Activated CD4-positive, alpha-beta T cell treated with anti-CD3 and anti-CD28 coated beads for 36 hours (primary cell): ENCODE measurements at regions of chr9 and their contacts with region 1.

Region 1: GRCh38 chr9:87678650-87679515 is 47.0 kb upstream of the CTSL start:
- DNase-seq: peak; percentile 55
- ATAC-seq: peak; percentile 36
- H3K4me3 Mint-ChIP-seq: no peak overlapping the region
- H3K27ac Mint-ChIP-seq: no peak overlapping the region
- H3K4me1 Mint-ChIP-seq: peaks cover 11% of the 10 kb centered on the region
- H3K27me3 Mint-ChIP-seq: no peaks in the 10 kb centered on the region

Region 2: GRCh38 chr9:86749894-86750255 is 929.0 kb before region 1 on chr9:
- CTCF ChIA-PET with region 1: no interaction called
- POLR2A ChIA-PET with region 1: no interaction called
- intact Hi-C with region 1: no loop called
- DNase-seq: no peak
- ATAC-seq: no peak
- H3K4me3 Mint-ChIP-seq: no peak overlapping the region
- H3K27ac Mint-ChIP-seq: no peak overlapping the region
- H3K4me1 Mint-ChIP-seq: no peaks in the 10 kb centered on the region
- H3K27me3 Mint-ChIP-seq: no peaks in the 10 kb centered on the region

Region 3: GRCh38 chr9:87359264-87359663 is 319.6 kb before region 1 on chr9:
- CTCF ChIA-PET with region 1: no interaction called
- POLR2A ChIA-PET with region 1: no interaction called
- intact Hi-C with region 1: no loop called
- DNase-seq: no peak
- ATAC-seq: no peak
- H3K4me3 Mint-ChIP-seq: no peak overlapping the region
- H3K27ac Mint-ChIP-seq: no peak overlapping the region
- H3K4me1 Mint-ChIP-seq: no peaks in the 10 kb centered on the region
- H3K27me3 Mint-ChIP-seq: peaks cover 31% of the 10 kb centered on the region

Region 4: DNA sequence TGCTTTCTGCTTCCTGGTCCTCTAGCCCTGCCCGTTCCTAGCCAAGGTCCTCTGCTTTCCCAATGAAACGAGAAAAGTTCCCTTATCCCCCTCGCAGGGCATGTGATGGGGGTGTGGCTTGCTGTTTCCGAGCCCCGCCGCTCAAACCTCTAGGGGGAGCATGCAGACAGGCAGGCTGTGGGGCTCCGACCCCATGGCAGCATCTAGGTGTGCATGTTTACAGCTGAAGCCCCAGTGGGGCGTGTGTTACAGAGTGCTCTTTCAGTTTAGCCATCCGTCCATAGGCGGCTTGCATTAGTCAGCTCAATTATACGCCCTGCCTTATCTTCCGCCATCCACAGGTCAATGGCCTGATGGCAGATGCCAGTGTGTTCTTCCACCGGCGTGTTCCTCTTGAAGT is 155.5 kb after region 1 on chr9:
- CTCF ChIA-PET with region 1: no interaction called
- POLR2A ChIA-PET with region 1: no interaction called
- intact Hi-C with region 1: loop called in 1 of 2 experiments (anchors 5 kb)
- DNase-seq: peak; percentile 27
- ATAC-seq: no peak
- H3K4me3 Mint-ChIP-seq: no peak overlapping the region
- H3K27ac Mint-ChIP-seq: no peak overlapping the region
- H3K4me1 Mint-ChIP-seq: peaks cover 10% of the 10 kb centered on the region
- H3K27me3 Mint-ChIP-seq: no peaks in the 10 kb centered on the region